ENCODE measurements at regions of chr7 and their contacts with region 1.

Region 1: GRCh38 chr7:74032191-74032490 is 4.2 kb downstream of the ELN start:
- DNase-seq: peak; percentile 68 to 88
- H3K4me3 ChIP-seq: peak overlapping the region; percentile 80 to 93
- H3K27ac ChIP-seq: peak overlapping the region; percentile 98
- H3K4me1 ChIP-seq: peaks cover 0 to 77% (median 67%) of the 10 kb centered on the region in 4 donors
- H3K27me3 ChIP-seq: no peaks in the 10 kb centered on the region
- CTCF ChIP-seq: no peak

Region 2: DNA sequence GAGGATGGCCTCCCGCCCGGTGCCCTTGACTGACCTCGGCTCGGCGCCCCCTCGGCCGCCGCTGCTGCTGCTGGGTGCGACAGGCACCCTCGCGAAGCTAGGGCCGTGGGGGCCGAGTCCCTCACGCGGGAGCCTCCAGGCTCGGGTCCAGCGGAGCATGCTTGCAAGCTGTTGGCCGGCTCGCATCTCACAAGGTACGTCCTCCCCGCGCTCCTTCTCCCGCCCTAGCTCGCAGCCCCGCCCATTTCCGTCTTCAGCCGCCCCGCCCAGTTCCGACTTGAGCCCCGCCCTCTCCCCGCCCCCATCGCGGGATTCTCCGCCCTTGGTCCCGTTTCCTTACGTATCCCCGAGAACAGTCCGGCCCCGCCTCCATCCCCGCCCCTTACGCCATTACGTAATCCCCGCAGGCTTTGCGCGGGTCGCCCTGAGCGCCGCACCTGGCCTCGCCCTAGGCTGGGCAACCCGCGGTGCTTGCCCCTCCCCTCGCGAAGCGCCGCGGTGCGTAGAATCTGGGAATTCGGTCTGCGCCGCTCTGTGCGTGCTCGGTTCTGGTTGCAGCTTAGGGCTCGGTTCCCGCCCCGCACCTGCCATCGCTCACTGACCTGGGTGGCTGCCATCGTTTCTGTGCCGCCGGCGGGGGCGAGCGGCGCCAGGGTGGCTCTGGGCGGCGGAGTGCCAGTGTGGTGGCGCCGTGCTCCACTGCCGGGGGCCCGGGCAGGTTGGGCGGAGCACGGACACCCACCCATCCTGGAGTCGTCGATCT is 293.3 kb before region 1 on chr7 and contains the start of gene ABHD11:
- intact Hi-C with region 1: loop called (anchors 10 kb)
- DNase-seq: peak; percentile 96 to 99
- H3K4me3 ChIP-seq: peak within 1 kb of the TSS; percentile 74 to 93
- H3K27ac ChIP-seq: peak within 1 kb of the TSS; percentile 83 to 89
- H3K4me1 ChIP-seq: peaks cover 0 to 38% (median 30%) of the 10 kb centered on the region in 4 donors
- H3K27me3 ChIP-seq: no peaks in the 10 kb centered on the region
- CTCF ChIP-seq: no peak

Region 3: GRCh38 chr7:74575138-74575727 is 543.1 kb after region 1 on chr7:
- intact Hi-C with region 1: no loop called
- DNase-seq: no peak
- H3K4me3 ChIP-seq: no peak overlapping the region
- H3K27ac ChIP-seq: no peak overlapping the region
- H3K4me1 ChIP-seq: peaks cover 0 to 18% (median 8%) of the 10 kb centered on the region in 4 donors
- H3K27me3 ChIP-seq: no peaks in the 10 kb centered on the region
- CTCF ChIP-seq: no peak

Measured in tibial artery (tissue), 4 donors.